Heart right ventricle (tissue), 16 donors: ENCODE measurements at regions of chr11 and their contacts with region 1.

Region 1: DNA sequence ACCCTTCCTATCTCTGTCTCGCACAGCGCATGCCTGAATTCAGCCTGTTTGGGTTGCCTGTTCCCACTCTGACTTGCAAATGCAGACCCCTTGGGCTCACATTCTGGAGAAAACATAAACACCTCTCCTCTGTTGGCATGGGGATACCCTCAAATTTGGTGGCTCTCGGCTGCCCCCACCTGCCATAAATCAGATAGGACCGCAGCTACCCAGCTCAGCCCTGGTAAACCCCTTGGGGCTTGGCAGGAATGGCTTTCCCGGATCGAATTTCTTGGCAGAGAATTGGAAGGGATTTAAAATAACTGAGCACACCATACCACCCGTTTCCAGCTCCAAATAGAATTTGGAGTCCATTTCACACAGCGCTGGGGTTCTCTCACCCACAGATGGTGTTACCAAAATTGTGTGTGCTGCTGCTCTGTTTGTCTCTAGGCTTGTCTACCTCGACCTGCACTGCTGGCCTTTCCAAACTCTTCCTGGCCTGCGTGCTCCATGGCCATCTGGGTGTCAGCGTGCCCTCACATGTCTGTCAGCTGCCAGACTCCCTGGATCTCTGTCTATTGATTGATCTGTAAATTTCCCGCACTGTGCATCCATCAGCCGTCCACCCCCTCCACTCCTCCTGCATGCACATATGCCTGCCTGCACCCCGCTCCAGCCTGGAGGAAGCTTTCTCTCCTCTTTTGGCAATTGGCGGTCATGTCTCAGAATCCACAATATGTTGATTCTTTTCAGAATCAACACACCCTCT is 134.0 kb downstream of the NTM start:
- DNase-seq: no peak
- ATAC-seq: peak in 6 of 8 donors; percentile 41 to 86 (median 54)
- H3K4me3 ChIP-seq: no peak overlapping the region
- H3K27ac ChIP-seq: no peak overlapping the region
- H3K4me1 ChIP-seq: no peaks in the 10 kb centered on the region
- H3K27me3 ChIP-seq: peaks cover 0 to 30% (median 8%) of the 10 kb centered on the region in 7 donors
- CTCF ChIP-seq: peak in 7 of 9 donors; percentile 20 to 43 (median 29)

Region 2: DNA sequence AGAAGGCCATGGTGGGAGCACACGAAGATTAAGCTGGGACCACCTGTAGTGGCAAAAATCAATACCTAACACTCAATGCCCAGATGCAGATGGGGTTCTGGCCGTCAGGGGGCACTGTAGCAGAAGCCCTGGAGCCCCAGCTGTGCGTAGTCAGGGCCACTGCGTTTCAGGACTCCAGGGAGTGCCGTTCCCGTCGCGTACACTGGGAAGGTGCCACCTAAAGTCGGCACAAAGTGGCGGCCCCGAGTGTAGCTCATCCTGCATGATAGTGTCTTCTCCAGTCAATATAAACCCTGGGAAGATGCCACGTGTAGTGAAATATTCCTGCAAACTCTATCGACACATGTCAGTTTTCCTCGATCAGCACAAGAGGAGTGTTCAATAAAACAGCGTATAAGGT is 257.7 kb before region 1 on chr11:
- intact Hi-C with region 1: loop called in 5 of 10 experiments (anchors 5 to 10 kb)
- DNase-seq: peak; percentile 8 to 41
- ATAC-seq: peak in 7 of 8 donors; percentile 28 to 86 (median 56)
- H3K4me3 ChIP-seq: no peak overlapping the region
- H3K27ac ChIP-seq: no peak overlapping the region
- H3K4me1 ChIP-seq: peaks cover 0 to 7% (median 0%) of the 10 kb centered on the region in 9 donors
- H3K27me3 ChIP-seq: peaks cover 0 to 61% (median 37%) of the 10 kb centered on the region in 7 donors
- CTCF ChIP-seq: peak; percentile 30 to 61 (median 52)

Region 3: GRCh38 chr11:131408025-131408640 is 96.2 kb before region 1 on chr11:
- intact Hi-C with region 1: loop called in 3 of 10 experiments (anchors 5 to 10 kb)
- DNase-seq: peak in 1 of 2 donors; percentile 24
- ATAC-seq: peak in 2 of 8 donors; percentile 12 to 68
- H3K4me3 ChIP-seq: no peak overlapping the region
- H3K27ac ChIP-seq: no peak overlapping the region
- H3K4me1 ChIP-seq: no peaks in the 10 kb centered on the region
- H3K27me3 ChIP-seq: peaks cover 0 to 10% (median 0%) of the 10 kb centered on the region in 7 donors
- CTCF ChIP-seq: peak in 7 of 9 donors; percentile 16 to 50 (median 43)

Region 4: DNA sequence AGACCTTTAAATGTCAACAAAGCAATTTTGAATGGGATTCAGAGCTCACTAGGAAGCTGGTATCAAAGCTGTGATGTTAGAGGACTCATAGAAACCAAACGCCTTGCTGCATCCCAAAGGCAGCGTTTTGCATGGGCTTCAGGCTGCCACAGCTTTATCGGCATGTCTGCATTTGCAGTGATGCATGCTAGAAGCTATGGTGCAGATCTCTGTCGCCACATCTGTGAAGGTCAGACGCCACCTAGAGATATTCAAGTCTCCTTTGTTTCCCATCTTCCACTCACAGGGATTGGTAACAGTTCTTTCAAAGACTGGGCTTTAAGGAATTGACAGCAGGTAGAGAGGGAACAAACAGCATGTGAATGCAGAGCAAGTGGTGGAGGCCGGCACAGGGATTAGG is 86.2 kb before region 1 on chr11:
- intact Hi-C with region 1: loop called in 1 of 10 experiments (anchors 10 kb)
- DNase-seq: no peak
- ATAC-seq: no peak
- H3K4me3 ChIP-seq: no peak overlapping the region
- H3K27ac ChIP-seq: no peak overlapping the region
- H3K4me1 ChIP-seq: no peaks in the 10 kb centered on the region
- H3K27me3 ChIP-seq: peaks cover 0 to 31% (median 0%) of the 10 kb centered on the region in 7 donors
- CTCF ChIP-seq: no peak

Region 5: GRCh38 chr11:131572423-131572822 is 68.0 kb after region 1 on chr11:
- intact Hi-C with region 1: no loop called
- DNase-seq: no peak
- ATAC-seq: no peak
- H3K4me3 ChIP-seq: no peak overlapping the region
- H3K27ac ChIP-seq: no peak overlapping the region
- H3K4me1 ChIP-seq: no peaks in the 10 kb centered on the region
- H3K27me3 ChIP-seq: peaks cover 0 to 30% (median 8%) of the 10 kb centered on the region in 7 donors
- CTCF ChIP-seq: no peak